ENCODE measurements at regions of chr3 and their contacts with region 1.

Region 1: DNA sequence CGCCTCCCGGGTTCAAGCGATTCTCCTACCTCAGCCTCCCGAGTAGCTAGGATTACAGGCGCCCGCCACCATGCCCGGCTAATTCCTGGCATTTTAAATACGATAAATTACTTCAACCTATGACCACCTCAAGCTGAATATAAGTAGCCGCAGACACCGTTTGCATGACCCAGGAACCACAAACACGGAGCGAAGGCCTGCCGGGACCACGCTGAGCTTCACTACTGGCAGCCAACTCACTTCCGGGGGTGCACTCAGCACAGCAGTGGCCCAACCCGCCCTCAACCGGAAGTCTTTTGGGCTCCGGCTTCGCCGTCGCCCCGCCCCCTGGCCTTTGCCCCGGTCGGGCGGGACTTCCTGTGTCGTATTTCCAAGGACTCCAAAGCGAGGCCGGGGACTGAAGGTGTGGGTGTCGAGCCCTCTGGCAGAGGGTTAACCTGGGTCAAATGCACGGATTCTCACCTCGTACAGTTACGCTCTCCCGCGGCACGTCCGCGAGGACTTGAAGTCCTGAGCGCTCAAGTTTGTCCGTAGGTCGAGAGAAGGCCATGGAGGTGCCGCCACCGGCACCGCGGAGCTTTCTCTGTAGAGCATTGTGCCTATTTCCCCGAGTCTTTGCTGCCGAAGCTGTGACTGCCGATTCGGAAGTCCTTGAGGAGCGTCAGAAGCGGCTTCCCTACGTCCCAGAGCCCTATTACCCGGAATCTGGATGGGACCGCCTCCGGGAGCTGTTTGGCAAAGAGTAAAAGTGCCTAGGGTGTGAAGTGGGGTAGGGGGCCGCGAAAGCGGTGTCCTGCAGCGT is at the start of gene TIMMDC1:
- DNase-seq: peak; percentile 94 to 97
- H3K4me3 ChIP-seq: peak within 1 kb of the TSS; percentile 98
- H3K27ac ChIP-seq: peak within 1 kb of the TSS; percentile 85
- H3K4me1 ChIP-seq: peaks cover 24% of the 10 kb centered on the region; the same call in 1 of the 2 replicates
- H3K27me3 ChIP-seq: no peaks in the 10 kb centered on the region
- CTCF ChIP-seq: no peak
- total RNA-seq, gene TIMMDC1: 145 and 203 TPM in 2 replicates

Region 2: GRCh38 chr3:119322835-119323722 is 175.3 kb before region 1 on chr3:
- CTCF ChIA-PET with region 1: no interaction called
- POLR2A ChIA-PET with region 1: interaction called, 12 read pairs
- intact Hi-C with region 1: no loop called
- DNase-seq: peak; percentile 75 to 85
- H3K4me3 ChIP-seq: peak overlapping the region; percentile 81
- H3K27ac ChIP-seq: peak overlapping the region; percentile 73
- H3K4me1 ChIP-seq: peaks cover 15% of the 10 kb centered on the region
- H3K27me3 ChIP-seq: no peaks in the 10 kb centered on the region
- CTCF ChIP-seq: no peak; the same call in 1 of the 2 replicates

Region 3: DNA sequence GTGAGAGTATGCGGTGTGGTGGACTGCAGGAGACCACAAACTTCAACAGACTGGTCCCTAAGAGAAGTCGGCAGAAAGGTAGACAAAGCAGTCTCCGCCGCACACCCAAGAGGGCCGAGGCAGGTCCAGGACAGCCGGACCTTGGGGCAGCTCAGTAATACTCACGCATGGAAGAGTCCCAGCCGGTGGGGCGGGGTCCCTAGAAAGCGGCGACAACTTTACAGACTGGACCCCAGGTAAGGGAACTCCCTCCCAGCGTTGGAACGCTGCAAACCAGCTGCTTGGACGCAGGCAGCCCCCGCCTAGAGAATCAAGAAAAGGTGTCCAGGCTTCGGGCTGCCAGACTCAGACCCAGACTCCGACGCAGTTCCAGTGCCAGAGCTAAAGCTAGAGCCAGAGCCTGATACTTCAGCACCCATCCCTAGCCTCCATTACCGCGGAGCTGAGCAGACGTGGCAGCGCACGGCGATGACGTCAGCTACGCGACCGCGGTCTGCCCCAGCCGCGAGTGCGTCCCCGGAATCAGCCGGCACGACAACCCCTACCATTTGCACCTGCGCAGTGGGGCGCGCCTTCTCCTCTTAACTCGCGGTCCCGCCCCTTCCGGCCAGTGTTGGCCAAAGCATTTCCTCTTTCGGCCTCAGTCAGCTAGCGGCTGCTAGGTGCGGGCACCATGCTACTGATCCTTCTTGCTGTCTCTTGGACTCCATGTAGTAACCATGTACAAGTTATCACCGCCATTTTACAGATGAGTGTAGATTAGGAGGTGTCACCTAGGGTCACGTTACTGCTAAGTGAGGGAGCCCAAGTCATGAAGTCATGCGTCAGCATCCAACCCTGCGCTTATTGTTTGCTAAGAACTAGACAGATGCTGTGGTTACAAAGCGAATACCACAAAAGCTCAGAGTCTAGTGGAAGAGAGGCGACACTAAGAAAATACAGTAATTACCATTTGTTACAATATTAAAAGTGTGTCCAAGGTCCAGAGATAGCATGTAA is 34.9 kb before region 1 on chr3 and contains the start of gene TMEM39A:
- CTCF ChIA-PET with region 1: no interaction called
- POLR2A ChIA-PET with region 1: interaction called, 11 read pairs
- intact Hi-C with region 1: loop called (anchors 1 kb)
- DNase-seq: peak; percentile 92 to 99
- H3K4me3 ChIP-seq: peak within 1 kb of the TSS; percentile 87
- H3K27ac ChIP-seq: peak within 1 kb of the TSS; percentile 56
- H3K4me1 ChIP-seq: peaks cover 17% of the 10 kb centered on the region
- H3K27me3 ChIP-seq: no peaks in the 10 kb centered on the region
- CTCF ChIP-seq: peak; percentile 40; the same call in 1 of the 2 replicates
- total RNA-seq, gene TMEM39A: 46.8 and 51.7 TPM in 2 replicates

Region 4: DNA sequence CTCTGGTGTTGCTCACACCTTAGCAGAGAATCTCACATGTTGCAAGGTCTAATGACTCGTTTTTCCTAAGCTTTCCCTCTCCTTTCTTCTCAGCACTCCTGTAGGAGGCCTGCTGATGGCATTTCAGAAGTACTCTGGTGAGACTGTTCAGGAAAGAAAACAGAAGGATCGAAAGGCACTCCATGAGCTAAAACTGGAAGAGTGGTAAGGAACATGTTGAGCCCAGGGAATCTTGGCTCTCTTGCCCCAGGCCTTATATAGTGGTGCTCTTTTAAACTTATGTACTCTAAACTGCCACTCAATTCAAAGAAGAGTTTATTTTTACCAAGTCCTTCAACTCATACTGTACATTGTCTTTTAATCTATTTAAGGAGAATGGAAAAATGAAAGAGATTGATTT is 18.7 kb after region 1 on chr3:
- CTCF ChIA-PET with region 1: no interaction called
- POLR2A ChIA-PET with region 1: interaction called, 22 read pairs
- intact Hi-C with region 1: no loop called
- DNase-seq: no peak
- H3K4me3 ChIP-seq: no peak overlapping the region
- H3K27ac ChIP-seq: no peak overlapping the region
- H3K4me1 ChIP-seq: no peaks in the 10 kb centered on the region
- H3K27me3 ChIP-seq: no peaks in the 10 kb centered on the region
- CTCF ChIP-seq: no peak